Ascending aorta (tissue), 2 donors: ENCODE measurements at regions of chr1 and their contacts with region 1.

Region 1: GRCh38 chr1:62746085-62746808 is 37.7 kb upstream of the ATG4C start:
- DNase-seq: no peak
- H3K4me3 ChIP-seq: peak overlapping the region in 1 of 2 donors; percentile 51
- H3K27ac ChIP-seq: no peak overlapping the region
- H3K4me1 ChIP-seq: peaks cover 0 to 2% of the 10 kb centered on the region in 2 donors
- H3K27me3 ChIP-seq: no peaks in the 10 kb centered on the region
- CTCF ChIP-seq: peak; percentile 40 to 72 (median 43)

Region 2: DNA sequence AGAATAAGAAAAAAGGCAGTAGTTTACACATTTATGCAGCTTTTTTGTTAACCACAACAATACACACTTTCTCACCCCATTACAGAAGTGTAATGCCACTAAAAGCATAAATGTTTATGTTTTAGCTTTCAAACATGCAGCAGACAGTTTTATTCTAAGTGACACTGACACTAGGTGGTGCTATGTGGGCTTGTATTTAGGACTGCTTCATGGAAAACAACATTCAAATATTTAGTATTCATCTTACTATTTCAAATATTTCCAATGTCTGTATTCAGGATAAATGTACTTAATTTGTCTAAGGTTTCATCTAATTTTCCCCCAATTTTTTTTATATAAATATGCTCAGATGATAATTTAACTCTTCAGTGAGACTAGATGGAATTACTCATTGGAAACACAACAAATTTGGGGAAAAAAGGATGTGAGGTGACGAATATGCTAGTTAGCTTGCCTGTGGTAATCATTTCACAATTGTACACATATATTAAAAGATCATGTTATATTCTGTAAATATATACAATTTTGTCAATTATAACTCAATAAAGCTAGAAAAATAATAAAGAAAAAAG is 238.0 kb before region 1 on chr1:
- intact Hi-C with region 1: loop called (anchors 2 kb)
- DNase-seq: no peak
- H3K4me3 ChIP-seq: no peak overlapping the region
- H3K27ac ChIP-seq: no peak overlapping the region
- H3K4me1 ChIP-seq: no peaks in the 10 kb centered on the region
- H3K27me3 ChIP-seq: no peaks in the 10 kb centered on the region
- CTCF ChIP-seq: peak in 2 of 3 experiments; percentile 25 to 53

Region 3: GRCh38 chr1:62530516-62531154 is 215.6 kb before region 1 on chr1:
- intact Hi-C with region 1: loop called (anchors 1 kb)
- DNase-seq: peak in 1 of 2 donors; percentile 69
- H3K4me3 ChIP-seq: no peak overlapping the region
- H3K27ac ChIP-seq: no peak overlapping the region
- H3K4me1 ChIP-seq: peaks cover 0 to 2% of the 10 kb centered on the region in 2 donors
- H3K27me3 ChIP-seq: no peaks in the 10 kb centered on the region
- CTCF ChIP-seq: peak; percentile 39 to 65 (median 52)

Region 4: DNA sequence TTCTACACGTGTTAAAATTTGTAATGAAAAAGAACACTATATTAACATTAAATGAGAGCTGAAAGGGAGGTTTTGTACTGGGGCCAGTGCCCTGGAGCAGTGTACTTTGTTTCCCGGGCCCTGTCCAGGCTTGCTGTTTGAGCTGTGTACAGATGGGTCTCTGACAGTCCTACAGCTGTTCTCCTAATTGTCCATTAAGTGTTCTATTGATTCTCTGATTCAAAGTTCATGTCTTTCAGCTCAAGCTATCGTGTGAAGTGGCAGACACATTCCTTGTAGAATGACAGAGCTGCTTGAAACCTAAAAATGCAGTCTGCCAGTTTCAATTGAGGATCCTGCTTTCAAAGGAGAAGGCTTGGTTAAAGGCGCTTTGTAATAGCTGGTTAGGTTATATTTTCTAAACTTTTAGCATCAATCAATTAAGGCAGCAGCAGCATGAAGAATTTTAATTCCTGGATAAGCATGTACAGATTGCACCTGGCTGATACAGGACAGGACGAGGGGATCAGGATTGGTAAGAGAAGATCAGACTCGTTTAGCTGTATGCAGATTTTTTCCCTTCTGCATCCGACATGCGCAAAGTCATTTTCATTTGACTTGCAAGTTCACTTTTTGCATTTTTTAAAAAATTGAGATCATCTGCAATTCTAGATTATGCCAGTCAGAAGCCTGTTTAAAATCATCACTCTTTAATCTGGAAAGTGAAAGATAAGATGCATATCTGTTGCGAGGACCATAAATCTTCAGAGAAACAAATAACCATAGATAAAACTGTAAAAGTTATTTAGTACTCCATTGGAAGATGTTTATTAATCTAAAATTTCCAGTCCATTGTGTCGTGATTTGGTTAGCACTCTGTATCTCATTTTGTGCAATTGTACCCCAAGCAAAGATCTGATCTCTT is 136.2 kb after region 1 on chr1:
- intact Hi-C with region 1: no loop called
- DNase-seq: no peak
- H3K4me3 ChIP-seq: no peak overlapping the region
- H3K27ac ChIP-seq: no peak overlapping the region
- H3K4me1 ChIP-seq: no peaks in the 10 kb centered on the region
- H3K27me3 ChIP-seq: no peaks in the 10 kb centered on the region
- CTCF ChIP-seq: no peak